ENCODE measurements at regions of chr2 and their contacts with region 1.

Region 1: GRCh38 chr2:43611987-43612894 is 16.4 kb upstream of the THADA start:
- DNase-seq: peak; percentile 81
- H3K4me3 Mint-ChIP-seq: no peak overlapping the region
- H3K27ac Mint-ChIP-seq: no peak overlapping the region
- H3K4me1 Mint-ChIP-seq: no peaks in the 10 kb centered on the region
- H3K27me3 Mint-ChIP-seq: peaks cover 8% of the 10 kb centered on the region

Region 2: GRCh38 chr2:43595603-43596412 is 16.4 kb before region 1 on chr2 and contains the start of gene THADA:
- CTCF ChIA-PET with region 1: interaction called, 22 read pairs
- DNase-seq: peak; percentile 99
- H3K4me3 Mint-ChIP-seq: peak within 1 kb of the TSS; percentile 94
- H3K27ac Mint-ChIP-seq: peak within 1 kb of the TSS; percentile 94
- H3K4me1 Mint-ChIP-seq: peaks cover 26% of the 10 kb centered on the region
- H3K27me3 Mint-ChIP-seq: peaks cover 4% of the 10 kb centered on the region

Region 3: GRCh38 chr2:43745457-43745856 is 133.2 kb after region 1 on chr2:
- CTCF ChIA-PET with region 1: no interaction called
- DNase-seq: no peak
- H3K4me3 Mint-ChIP-seq: no peak overlapping the region
- H3K27ac Mint-ChIP-seq: no peak overlapping the region
- H3K4me1 Mint-ChIP-seq: no peaks in the 10 kb centered on the region
- H3K27me3 Mint-ChIP-seq: no peaks in the 10 kb centered on the region

Region 4: GRCh38 chr2:43905371-43905803 is 293.1 kb after region 1 on chr2:
- CTCF ChIA-PET with region 1: no interaction called
- DNase-seq: no peak
- H3K4me3 Mint-ChIP-seq: no peak overlapping the region
- H3K27ac Mint-ChIP-seq: no peak overlapping the region
- H3K4me1 Mint-ChIP-seq: no peaks in the 10 kb centered on the region
- H3K27me3 Mint-ChIP-seq: no peaks in the 10 kb centered on the region